ENCODE measurements at regions of chr2 and their contacts with region 1.

Region 1: DNA sequence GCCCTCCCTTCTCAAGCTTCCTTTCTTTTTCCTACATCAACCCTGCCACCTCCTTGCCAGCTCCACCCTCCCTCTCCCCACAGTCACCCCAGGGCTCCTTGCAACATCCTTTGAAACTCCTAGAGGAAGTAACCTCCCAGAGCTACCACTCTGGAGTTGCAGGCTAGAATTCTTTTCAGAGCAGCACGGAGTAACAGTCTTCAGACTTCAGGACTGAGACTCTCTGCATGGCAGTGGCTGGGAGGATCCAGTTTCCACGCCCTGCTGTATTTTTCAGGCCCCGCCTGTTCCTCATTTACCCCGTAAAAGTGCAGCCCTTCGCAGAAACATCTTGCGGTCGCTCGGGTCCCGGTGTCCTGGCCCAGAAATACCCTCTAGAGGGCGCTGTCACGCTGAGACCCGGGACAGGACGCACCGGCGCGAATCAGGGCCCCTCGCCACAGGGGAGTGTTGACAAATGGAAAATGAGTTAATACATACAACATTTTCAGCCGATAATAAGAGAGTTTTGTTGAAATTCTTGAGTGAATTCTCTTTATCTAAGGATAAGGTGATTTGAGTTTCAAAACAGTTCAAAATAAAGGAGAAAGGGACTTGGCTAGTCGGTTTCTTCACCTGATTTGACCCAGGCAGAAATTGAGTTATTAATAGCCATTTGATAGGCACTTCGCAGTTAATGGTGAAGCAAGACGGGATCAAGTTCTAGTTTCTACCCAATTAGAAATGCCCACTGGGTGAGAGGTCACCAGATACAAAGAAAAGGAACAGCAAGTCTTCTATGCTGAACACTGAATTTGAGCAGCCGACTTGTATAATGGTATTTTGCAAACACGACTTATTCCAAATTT is 18.5 kb upstream of the NTSR2 start:
- DNase-seq: peak; percentile 9
- ATAC-seq: peak; percentile 95
- H3K4me3 ChIP-seq: peak overlapping the region; percentile 23; the same call in 1 of the 2 replicates
- H3K27ac ChIP-seq: no peak overlapping the region
- H3K4me1 ChIP-seq: 0 out of 2 replicates have a peak, but pooled peaks cover 4% of the 10 kb centered on the region
- H3K27me3 ChIP-seq: peaks cover 0 to 2% of the 10 kb centered on the region in 2 experiments; a peak in 2 of 4 replicates
- CTCF ChIP-seq: peak; percentile 71 to 87 (median 82)
- EP300 ChIP-seq: no peak
- POLR2A ChIP-seq: no peak
- RAD21 ChIP-seq: peak; percentile 71

Region 2: GRCh38 chr2:11286749-11287148 is 401.7 kb before region 1 on chr2:
- CTCF ChIA-PET with region 1: no interaction called
- POLR2A ChIA-PET with region 1: no interaction called
- RAD21 ChIA-PET with region 1: no interaction called
- SMC1A ChIA-PET with region 1: no interaction called
- in situ Hi-C with region 1: no loop called
- intact Hi-C with region 1: no loop called
- DNase-seq: no peak
- ATAC-seq: no peak
- H3K4me3 ChIP-seq: no peak overlapping the region
- H3K27ac ChIP-seq: no peak overlapping the region
- H3K4me1 ChIP-seq: no peaks in the 10 kb centered on the region
- H3K27me3 ChIP-seq: no peaks in the 10 kb centered on the region
- CTCF ChIP-seq: no peak
- EP300 ChIP-seq: no peak
- POLR2A ChIP-seq: no peak
- RAD21 ChIP-seq: no peak

Region 3: GRCh38 chr2:11657646-11658045 is 30.8 kb before region 1 on chr2:
- CTCF ChIA-PET with region 1: no interaction called
- POLR2A ChIA-PET with region 1: no interaction called
- RAD21 ChIA-PET with region 1: no interaction called
- SMC1A ChIA-PET with region 1: no interaction called
- in situ Hi-C with region 1: no loop called
- intact Hi-C with region 1: no loop called
- DNase-seq: no peak
- ATAC-seq: no peak
- H3K4me3 ChIP-seq: no peak overlapping the region
- H3K27ac ChIP-seq: no peak overlapping the region
- H3K4me1 ChIP-seq: no peaks in the 10 kb centered on the region
- H3K27me3 ChIP-seq: no peaks in the 10 kb centered on the region
- CTCF ChIP-seq: no peak
- EP300 ChIP-seq: no peak
- POLR2A ChIP-seq: no peak
- RAD21 ChIP-seq: no peak

Region 4: DNA sequence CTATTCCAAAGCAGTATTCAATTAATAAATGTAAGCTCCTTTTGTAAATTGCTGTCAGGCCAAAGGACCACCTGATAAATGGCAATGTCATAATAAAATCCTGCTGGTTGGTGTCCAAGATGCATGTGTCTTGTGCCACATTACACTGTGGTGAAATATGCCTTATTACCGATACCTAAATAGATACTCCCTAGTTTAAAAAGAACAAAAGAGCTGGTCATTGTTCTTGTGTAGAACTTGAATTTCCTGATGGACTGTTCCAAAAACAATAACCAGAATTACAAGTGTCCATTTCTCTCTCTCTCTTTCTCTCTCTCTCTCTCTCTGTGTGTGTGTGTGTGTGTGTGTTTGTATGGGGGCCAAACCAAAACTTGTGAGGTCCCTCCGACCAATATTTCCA is 44.1 kb after region 1 on chr2:
- CTCF ChIA-PET with region 1: interaction called, 15 read pairs
- POLR2A ChIA-PET with region 1: no interaction called
- RAD21 ChIA-PET with region 1: no interaction called
- SMC1A ChIA-PET with region 1: interaction called, 5 read pairs
- in situ Hi-C with region 1: no loop called
- intact Hi-C with region 1: no loop called
- DNase-seq: no peak
- ATAC-seq: no peak
- H3K4me3 ChIP-seq: no peak overlapping the region
- H3K27ac ChIP-seq: no peak overlapping the region
- H3K4me1 ChIP-seq: no peaks in the 10 kb centered on the region
- H3K27me3 ChIP-seq: peaks cover 0 to 5% of the 10 kb centered on the region in 2 experiments; a peak in 2 of 4 replicates
- CTCF ChIP-seq: no peak
- EP300 ChIP-seq: no peak
- POLR2A ChIP-seq: no peak
- RAD21 ChIP-seq: no peak

Region 5: DNA sequence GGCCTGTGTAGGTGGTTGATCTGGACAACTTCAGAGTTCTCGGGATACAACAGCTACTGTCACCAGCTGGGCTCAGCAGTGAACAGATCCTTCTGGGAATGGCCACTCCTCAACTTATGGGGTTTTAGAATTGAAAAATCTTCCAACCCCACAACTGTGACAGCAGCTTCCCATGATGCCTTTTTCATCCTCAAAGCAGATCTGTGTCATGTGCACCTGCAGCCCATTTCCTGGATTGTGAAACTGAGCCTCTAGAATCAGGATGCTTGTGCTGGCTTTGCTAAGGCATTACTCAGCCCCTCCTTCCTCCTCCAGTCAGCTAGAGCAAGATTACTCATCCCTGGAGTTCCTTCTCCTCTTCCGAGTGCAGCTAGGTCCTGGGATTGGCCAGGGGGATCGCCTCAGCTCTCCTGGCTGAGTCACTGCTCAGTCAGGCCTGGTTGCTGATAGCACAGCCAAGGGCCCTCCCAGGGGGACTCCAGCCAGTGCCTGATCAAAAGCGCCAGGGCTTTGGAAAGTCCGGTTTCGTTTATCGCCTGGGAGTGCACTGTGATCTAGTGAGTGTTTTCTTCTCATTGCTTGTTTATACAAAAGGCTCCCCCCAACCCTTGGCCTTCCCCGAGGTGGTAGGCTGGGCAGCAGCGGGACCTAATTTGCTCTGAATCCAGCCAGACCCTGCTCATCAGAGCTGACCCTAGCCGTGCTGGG is 55.6 kb after region 1 on chr2:
- CTCF ChIA-PET with region 1: interaction called, 19 read pairs
- POLR2A ChIA-PET with region 1: no interaction called
- RAD21 ChIA-PET with region 1: interaction called, 6 read pairs
- SMC1A ChIA-PET with region 1: interaction called, 10 read pairs
- in situ Hi-C with region 1: no loop called
- intact Hi-C with region 1: loop called (anchors 2 kb)
- DNase-seq: peak; percentile 82
- ATAC-seq: peak; percentile 73
- H3K4me3 ChIP-seq: peak overlapping the region; percentile 1; the same call in 1 of the 2 replicates
- H3K27ac ChIP-seq: peak overlapping the region; percentile 4; the same call in 1 of the 2 replicates
- H3K4me1 ChIP-seq: peaks cover 39% of the 10 kb centered on the region
- H3K27me3 ChIP-seq: no peaks in the 10 kb centered on the region
- CTCF ChIP-seq: no peak
- EP300 ChIP-seq: no peak; a peak in 2 of 4 replicates
- POLR2A ChIP-seq: peak; percentile 26; the same call in 1 of the 2 replicates
- RAD21 ChIP-seq: no peak

Region 6: DNA sequence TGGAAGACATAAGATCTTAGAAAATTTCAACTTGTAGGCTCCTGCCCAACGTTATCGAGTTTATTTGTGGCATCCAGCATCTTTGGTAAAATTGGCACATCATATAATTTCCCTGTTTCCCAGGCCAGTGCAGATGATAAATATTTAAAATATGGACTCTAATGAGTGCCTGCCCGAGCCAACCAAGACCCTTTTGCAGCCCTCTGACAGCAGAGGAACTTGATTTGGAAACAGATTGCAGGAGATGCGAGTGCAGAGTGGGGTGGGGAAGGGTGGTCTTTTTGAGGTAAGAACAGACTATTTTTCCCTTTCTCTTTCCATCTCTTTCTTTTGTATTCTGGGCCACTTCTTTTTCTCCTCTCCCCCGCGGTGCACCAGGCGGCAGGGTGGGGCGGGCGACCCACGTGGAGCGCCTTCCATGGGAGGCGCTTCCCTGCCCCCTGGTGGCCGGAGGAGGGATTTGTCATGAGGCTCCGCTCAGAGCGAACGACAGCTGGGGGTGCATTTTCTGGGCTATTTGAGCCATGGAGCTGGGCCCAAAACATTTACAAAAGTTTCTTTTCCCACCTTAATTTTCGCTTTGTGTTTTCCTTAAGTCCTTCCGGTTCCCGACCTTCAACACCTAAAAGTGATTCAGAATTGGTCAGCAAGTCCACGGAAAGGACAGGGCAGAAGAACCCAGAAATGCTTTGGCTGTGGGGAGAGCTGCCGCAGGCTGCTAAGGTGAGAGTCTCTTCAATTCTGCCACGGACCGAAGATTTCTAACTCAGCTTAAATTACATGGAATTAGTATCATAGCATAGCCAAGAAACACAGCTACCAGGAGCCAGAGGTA is 90.7 kb after region 1 on chr2:
- CTCF ChIA-PET with region 1: interaction called, 353 read pairs
- POLR2A ChIA-PET with region 1: interaction called, 7 read pairs
- RAD21 ChIA-PET with region 1: interaction called, 14 read pairs
- SMC1A ChIA-PET with region 1: interaction called, 71 read pairs
- in situ Hi-C with region 1: loop called (anchors 5 kb)
- intact Hi-C with region 1: loop called (anchors 1 kb)
- DNase-seq: no peak
- ATAC-seq: peak; percentile 97
- H3K4me3 ChIP-seq: no peak overlapping the region
- H3K27ac ChIP-seq: no peak overlapping the region
- H3K4me1 ChIP-seq: peaks cover 7% of the 10 kb centered on the region
- H3K27me3 ChIP-seq: no peaks in the 10 kb centered on the region
- CTCF ChIP-seq: peak; percentile 92 to 95 (median 94)
- EP300 ChIP-seq: no peak
- POLR2A ChIP-seq: no peak
- RAD21 ChIP-seq: peak; percentile 97

Region 7: GRCh38 chr2:13006829-13007717 is 1318.6 kb after region 1 on chr2:
- CTCF ChIA-PET with region 1: interaction called, 3 read pairs
- POLR2A ChIA-PET with region 1: no interaction called
- RAD21 ChIA-PET with region 1: interaction called, 6 read pairs
- SMC1A ChIA-PET with region 1: no interaction called
- in situ Hi-C with region 1: no loop called
- intact Hi-C with region 1: loop called (anchors 10 kb)
- DNase-seq: no peak
- ATAC-seq: peak; percentile 93
- H3K4me3 ChIP-seq: no peak overlapping the region
- H3K27ac ChIP-seq: no peak overlapping the region
- H3K4me1 ChIP-seq: no peaks in the 10 kb centered on the region
- H3K27me3 ChIP-seq: no peaks in the 10 kb centered on the region; a peak in 1 of 4 replicates
- CTCF ChIP-seq: peak; percentile 65 to 78 (median 69)
- EP300 ChIP-seq: no peak
- POLR2A ChIP-seq: no peak
- RAD21 ChIP-seq: peak; percentile 75

Measured in GM12878 (cell line).